ENCODE measurements at regions of chr6 and their contacts with region 1.

Region 1: DNA sequence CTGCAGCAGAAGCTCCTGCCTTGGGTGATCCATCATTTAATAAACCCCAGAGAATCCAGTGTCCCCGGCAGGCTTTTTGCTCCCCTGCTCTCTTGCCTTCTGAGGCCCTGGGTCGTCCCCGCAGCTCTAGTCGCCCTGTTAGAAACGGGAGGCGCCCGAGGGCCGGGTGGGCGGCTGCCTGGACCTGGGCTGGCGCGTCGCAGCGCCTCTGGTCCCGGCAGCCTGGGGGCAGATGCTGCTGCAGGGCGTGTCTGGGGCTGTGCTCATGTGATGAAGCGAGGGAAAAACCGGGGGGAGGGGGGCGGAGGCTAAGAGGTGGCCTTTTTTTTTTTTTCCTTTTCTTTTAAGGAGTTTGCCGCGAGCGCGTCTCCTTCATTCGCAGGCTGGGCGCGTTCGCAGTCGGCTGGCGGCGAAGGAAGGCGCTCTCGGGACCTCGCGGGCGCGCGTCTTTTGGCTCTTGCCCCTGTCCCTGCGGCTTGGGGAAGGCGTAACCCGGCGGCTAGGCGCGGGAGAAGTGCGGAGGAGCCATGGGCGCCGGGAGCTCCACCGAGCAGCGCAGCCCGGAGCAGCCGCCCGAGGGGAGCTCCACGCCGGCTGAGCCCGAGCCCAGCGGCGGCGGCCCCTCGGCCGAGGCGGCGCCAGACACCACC is 394 bp downstream of the AKAP12 start:
- DNase-seq: peak; percentile 80 to 90 (median 83)
- ATAC-seq: peak; percentile 81 to 91 (median 90)
- H3K4me3 ChIP-seq: peak overlapping the region; percentile 62 to 90 (median 72)
- H3K27ac ChIP-seq: peak overlapping the region; percentile 52 to 97 (median 78)
- H3K4me1 ChIP-seq: peaks cover 0 to 19% (median 5%) of the 10 kb centered on the region in 12 donors
- H3K27me3 ChIP-seq: peaks cover 0 to 45% (median 0%) of the 10 kb centered on the region in 9 donors
- CTCF ChIP-seq: peak in 3 of 12 donors; percentile 8 to 35 (median 24)
- POLR2A ChIP-seq: peak in 1 of 2 donors; percentile 41

Region 2: GRCh38 chr6:151014404-151015100 is 225.6 kb before region 1 on chr6:
- intact Hi-C with region 1: loop called in 5 of 10 experiments (anchors 5 to 10 kb)
- DNase-seq: peak; percentile 61 to 73 (median 70)
- ATAC-seq: peak; percentile 45 to 79 (median 76)
- H3K4me3 ChIP-seq: peak overlapping the region in 5 of 12 donors; percentile 13 to 33 (median 24)
- H3K27ac ChIP-seq: no peak overlapping the region
- H3K4me1 ChIP-seq: peaks cover 0 to 11% (median 0%) of the 10 kb centered on the region in 12 donors
- H3K27me3 ChIP-seq: no peaks in the 10 kb centered on the region
- CTCF ChIP-seq: peak; percentile 93 to 99 (median 98)
- POLR2A ChIP-seq: no peak

Region 3: GRCh38 chr6:151306269-151306783 is 66.2 kb after region 1 on chr6:
- intact Hi-C with region 1: loop called in 1 of 10 experiments (anchors 5 kb)
- DNase-seq: no peak
- ATAC-seq: no peak
- H3K4me3 ChIP-seq: no peak overlapping the region
- H3K27ac ChIP-seq: peak overlapping the region in 1 of 12 donors; percentile 34
- H3K4me1 ChIP-seq: no peaks in the 10 kb centered on the region
- H3K27me3 ChIP-seq: no peaks in the 10 kb centered on the region
- CTCF ChIP-seq: no peak
- POLR2A ChIP-seq: no peak

Region 4: GRCh38 chr6:151323791-151324487 is 83.8 kb after region 1 on chr6:
- intact Hi-C with region 1: loop called in 6 of 10 experiments (anchors 2 to 5 kb)
- DNase-seq: peak; percentile 80 to 88 (median 84)
- ATAC-seq: peak; percentile 85 to 94 (median 90)
- H3K4me3 ChIP-seq: no peak overlapping the region
- H3K27ac ChIP-seq: peak overlapping the region in 9 of 12 donors; percentile 20 to 83 (median 60)
- H3K4me1 ChIP-seq: peaks cover 0 to 30% (median 18%) of the 10 kb centered on the region in 12 donors
- H3K27me3 ChIP-seq: peaks cover 0 to 13% (median 0%) of the 10 kb centered on the region in 9 donors
- CTCF ChIP-seq: peak; percentile 96 to 99 (median 98)
- POLR2A ChIP-seq: no peak

Measured in heart left ventricle (tissue), 16 donors.